ENCODE measurements at regions of chr15 and their contacts with region 1.

Region 1: DNA sequence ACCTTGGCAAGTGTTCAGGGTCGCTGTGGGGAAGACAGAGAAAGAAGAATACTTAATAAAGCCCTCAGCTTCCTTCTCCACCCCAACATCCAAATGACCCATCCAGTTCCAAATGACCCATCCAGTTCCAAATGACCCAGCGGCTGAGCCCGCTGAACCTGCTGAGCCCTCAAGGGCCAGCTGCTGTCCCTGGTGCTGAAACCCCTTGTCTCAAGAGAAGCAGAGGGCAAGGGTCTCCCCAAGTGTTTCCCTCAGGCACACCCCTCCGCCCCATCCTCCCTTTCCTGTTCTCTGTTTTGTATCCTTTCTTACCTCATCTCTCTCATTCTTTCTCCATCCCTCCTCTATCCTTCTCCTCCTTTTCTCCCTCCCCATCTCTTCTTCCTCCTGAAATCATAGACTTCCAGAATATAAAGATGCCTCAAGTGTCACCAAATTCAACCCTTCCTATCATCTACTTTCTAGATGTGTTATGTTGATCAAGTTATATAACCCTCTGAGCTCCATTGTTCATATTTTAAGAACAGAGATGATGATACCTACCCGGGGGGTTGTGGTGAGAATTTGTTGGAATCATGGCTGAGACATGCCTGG is 29.0 kb downstream of the CCDC33 start:
- DNase-seq: no peak
- H3K4me3 ChIP-seq: no peak overlapping the region
- H3K27ac ChIP-seq: peak overlapping the region in 1 of 2 experiments; percentile 79; a peak in 2 of 4 replicates
- H3K4me1 ChIP-seq: peaks cover 0 to 40% of the 10 kb centered on the region in 2 experiments; a peak in 2 of 4 replicates
- H3K27me3 ChIP-seq: peaks cover 4% of the 10 kb centered on the region; the same call in 1 of the 2 replicates
- CTCF ChIP-seq: no peak
- EP300 ChIP-seq: no peak
- RAD21 ChIP-seq: no peak

Region 2: GRCh38 chr15:74251131-74251811 is 13.9 kb before region 1 on chr15:
- CTCF ChIA-PET with region 1: interaction called, 17 read pairs
- POLR2A ChIA-PET with region 1: interaction called, 7 read pairs
- DNase-seq: peak; percentile 54
- H3K4me3 ChIP-seq: no peak overlapping the region
- H3K27ac ChIP-seq: peak overlapping the region in 1 of 2 experiments; percentile 94; a peak in 2 of 4 replicates
- H3K4me1 ChIP-seq: peaks cover 6 to 40% of the 10 kb centered on the region in 2 experiments; a peak in 3 of 4 replicates
- H3K27me3 ChIP-seq: no peaks in the 10 kb centered on the region
- CTCF ChIP-seq: no peak
- EP300 ChIP-seq: peak in 1 of 2 experiments; percentile 62; a peak in 2 of 4 replicates
- RAD21 ChIP-seq: peak; percentile 34

Region 3: DNA sequence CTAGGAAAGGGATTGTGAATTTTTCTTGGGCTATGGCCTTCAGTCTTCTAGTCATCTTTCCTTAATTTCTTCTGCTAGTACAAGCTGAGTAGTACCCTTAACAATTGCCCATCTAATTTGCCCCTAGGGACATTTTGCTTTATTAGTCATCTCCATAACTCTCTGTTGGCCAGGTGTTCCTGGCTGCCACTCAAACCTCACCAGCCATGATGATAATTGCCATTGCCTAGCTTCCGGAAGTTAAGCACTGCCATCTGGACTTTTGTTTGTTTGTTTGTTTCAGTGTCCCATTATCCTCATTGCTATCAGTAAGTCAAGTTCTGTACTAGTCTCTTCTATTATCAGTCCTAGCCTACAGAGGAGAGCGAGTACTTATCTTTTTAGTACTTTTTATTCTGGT is 232.4 kb after region 1 on chr15:
- CTCF ChIA-PET with region 1: no interaction called
- POLR2A ChIA-PET with region 1: no interaction called
- DNase-seq: no peak
- H3K4me3 ChIP-seq: no peak overlapping the region
- H3K27ac ChIP-seq: no peak overlapping the region
- H3K4me1 ChIP-seq: no peaks in the 10 kb centered on the region
- H3K27me3 ChIP-seq: no peaks in the 10 kb centered on the region
- CTCF ChIP-seq: no peak
- EP300 ChIP-seq: no peak
- RAD21 ChIP-seq: no peak